ENCODE measurements at regions of chr5 and their contacts with region 1.

Region 1: DNA sequence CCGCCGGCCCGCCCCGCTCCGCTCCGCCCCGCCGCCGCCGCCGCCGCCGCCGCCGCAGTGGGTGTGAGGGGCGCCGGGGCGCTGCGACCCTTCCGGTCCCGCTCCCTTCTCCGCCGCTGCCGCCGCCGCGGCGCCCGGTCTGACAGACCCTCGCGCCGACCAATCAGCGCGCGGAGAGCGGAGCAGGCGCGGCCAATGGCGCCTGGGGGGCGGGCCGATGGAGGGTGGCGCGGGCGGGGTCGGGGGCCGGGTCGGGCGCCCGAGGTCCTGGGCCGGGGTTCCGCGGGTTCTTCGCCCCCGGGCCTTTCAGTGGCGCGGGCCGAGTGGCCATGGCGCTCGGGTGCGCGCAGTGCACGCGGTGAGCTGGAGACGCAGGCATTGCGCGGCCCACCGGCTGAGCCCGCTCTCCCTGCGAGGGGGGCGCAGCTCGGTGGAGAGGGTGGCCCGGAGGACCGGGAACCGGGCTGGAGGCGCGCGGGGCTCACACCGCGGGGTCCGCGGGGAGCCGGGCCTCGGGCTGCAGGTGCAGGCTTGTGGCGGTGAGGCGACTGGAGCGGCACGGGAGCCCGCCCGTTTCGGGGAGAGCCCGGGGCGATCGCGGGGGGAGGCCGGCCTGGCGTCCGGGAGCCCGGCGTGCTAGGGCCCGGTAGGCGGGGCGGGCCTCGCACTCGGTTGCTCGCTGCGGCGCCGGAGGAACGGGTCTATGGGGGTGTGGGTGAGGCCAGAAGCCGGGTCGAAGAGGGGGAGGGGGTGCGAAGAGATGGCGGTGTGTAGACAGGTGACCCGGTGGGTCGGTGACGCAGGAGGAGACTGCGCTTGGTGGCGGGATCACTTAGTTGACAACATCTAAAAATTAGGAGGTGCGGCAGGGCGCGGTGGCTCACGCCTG is at the start of gene MAPK9:
- DNase-seq: peak; percentile 73 to 98 (median 82)

Region 2: GRCh38 chr5:180126726-180127681 is 165.2 kb before region 1 on chr5:
- intact Hi-C with region 1: loop called (anchors 5 kb)
- DNase-seq: peak in 7 of 10 donors; percentile 50 to 93 (median 70)

Region 3: DNA sequence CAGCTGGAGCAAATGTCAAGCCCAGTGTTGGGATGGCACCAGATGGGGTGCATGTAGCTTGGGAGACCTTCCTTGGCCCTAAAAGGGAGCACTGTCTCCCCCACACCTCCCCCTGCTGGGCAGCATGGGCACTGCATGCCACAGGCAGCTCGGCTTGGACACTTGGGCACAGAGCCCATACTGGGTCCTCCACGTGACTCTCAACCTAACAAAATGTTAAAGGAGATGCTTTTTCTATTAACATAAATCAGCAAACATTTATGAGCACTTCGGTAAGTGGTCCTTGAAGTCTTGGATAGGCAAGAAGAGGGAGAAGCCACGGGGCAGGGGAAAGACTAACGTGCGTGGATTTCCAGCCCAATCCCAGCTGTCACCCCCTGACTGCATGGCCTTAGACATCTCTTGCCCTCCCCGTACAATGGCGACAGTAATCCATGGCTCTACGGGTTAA is 23.6 kb after region 1 on chr5:
- intact Hi-C with region 1: loop called (anchors 2 kb)
- DNase-seq: peak in 7 of 10 donors; percentile 65 to 96 (median 79)

Region 4: DNA sequence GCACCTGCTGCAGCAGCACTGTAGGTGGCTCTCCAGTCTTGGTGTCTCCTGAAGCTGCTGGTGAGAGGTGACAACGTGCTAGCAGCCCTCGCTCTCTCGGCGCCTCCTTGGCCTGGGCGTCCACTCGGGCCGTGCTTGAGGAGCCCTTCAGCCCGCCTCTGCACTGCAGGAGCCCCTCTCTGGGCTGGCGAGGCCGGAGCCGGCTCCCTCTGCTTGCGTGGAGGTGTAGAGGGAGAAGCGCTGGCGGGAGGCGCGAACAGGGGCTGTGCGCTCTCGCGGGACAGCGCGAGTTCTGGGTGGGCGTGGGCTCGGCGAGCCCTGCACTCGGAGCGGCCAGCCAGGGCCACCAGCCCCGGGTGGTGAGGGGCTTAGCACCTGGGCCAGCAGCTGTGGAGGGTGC is 139.7 kb after region 1 on chr5:
- intact Hi-C with region 1: loop called (anchors 2 kb)
- DNase-seq: no peak

Region 5: GRCh38 chr5:180463216-180463900 is 171.2 kb after region 1 on chr5:
- intact Hi-C with region 1: no loop called
- DNase-seq: no peak

Region 6: GRCh38 chr5:180670586-180671359 is 378.6 kb after region 1 on chr5:
- intact Hi-C with region 1: loop called (anchors 5 kb)
- DNase-seq: peak; percentile 44 to 95 (median 70)

Region 7: GRCh38 chr5:181138258-181138657 is 846.1 kb after region 1 on chr5:
- intact Hi-C with region 1: no loop called
- DNase-seq: no peak